ENCODE measurements at regions of chr4 and their contacts with region 1.

Region 1: DNA sequence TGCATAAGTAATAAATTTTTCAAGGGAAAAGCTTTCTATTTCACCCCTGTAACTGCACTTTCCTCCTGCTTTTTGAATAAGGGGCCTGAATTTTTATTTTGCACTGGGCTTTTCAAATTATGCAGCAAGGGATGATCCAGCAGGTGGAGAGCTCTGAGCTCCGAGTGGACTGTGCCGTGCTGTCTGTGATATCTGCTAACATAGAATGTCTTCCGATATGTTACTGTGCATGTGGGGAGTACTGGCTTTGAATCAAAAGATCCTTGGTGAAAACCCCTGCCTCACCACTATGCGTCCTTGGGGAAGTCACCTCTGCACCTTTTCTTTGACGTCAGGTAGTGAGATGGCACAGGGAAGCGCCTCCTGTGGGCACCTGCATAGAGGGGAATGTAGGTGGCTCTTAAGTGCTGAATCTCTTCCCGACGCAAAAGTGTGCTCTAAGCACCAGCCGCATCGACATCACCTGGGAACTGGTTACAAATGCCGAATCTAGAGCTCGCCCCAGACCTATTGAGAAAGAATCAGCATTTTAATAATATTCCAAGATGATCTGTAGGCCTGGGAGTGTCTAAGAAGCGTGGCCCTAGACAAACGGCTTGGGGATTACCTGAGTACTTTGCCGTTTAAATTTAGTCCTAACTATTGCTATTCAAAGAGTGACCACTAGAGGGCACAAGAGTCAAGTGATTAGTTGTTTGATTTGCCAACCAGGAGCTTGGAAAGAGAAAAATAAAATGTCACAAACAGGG is 19.2 kb upstream of the WFS1 start:
- DNase-seq: no peak
- ATAC-seq: peak; percentile 63
- H3K4me3 Mint-ChIP-seq: no peak overlapping the region
- H3K27ac Mint-ChIP-seq: no peak overlapping the region
- H3K4me1 Mint-ChIP-seq: peaks cover 5% of the 10 kb centered on the region
- H3K27me3 Mint-ChIP-seq: peaks cover 54% of the 10 kb centered on the region

Region 2: DNA sequence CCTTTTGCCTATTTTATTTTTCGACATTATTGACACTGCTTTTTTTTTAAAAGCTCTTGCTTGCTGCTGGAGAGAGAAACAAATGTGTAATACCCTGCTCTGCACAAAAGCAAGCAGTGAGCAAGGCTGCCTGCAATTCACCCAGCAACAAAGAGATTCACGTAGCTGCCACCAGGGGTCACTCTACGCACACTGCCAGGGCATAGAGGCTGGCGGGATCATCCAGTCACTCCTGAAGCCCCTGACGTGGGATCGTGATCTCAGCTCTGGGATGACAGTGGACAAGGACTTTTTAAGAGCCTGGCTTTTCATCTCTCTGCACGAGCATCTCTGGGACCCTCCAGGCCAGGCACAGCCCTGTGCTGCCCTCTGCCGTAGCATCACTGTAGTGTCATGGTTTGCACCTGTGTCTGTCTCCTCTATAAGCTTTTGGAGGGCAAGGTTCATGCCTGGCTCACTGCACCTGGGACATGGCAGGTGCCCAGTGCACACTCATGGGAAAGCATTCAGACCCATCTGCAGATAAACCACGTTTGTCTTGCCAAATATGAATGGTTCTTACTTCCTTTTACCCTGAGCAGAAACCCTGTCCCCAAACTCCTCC is 252.0 kb before region 1 on chr4:
- CTCF ChIA-PET with region 1: interaction called, 25 read pairs
- DNase-seq: peak; percentile 66
- ATAC-seq: peak; percentile 77
- H3K4me3 Mint-ChIP-seq: no peak overlapping the region
- H3K27ac Mint-ChIP-seq: no peak overlapping the region
- H3K4me1 Mint-ChIP-seq: peaks cover 18% of the 10 kb centered on the region
- H3K27me3 Mint-ChIP-seq: peaks cover 7% of the 10 kb centered on the region

Region 3: DNA sequence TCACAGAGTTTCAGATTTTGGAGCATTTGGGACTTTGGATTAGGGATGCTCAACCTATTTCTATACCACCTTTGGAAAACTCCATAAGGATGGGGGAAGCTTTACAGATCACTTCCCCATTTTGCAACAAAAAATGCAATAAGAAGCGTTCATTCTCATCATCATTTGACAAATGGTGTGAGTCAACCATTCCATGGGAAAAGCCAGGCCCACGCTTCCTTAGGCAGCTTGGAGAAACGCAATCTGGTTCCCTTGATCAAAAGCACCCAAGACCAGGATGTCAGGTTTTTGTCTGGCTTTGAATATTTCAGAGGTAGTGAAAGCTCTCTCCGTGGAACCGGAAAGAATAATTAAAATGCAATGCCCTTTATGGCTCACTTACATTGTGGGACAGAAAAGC is 152.8 kb before region 1 on chr4:
- CTCF ChIA-PET with region 1: no interaction called
- DNase-seq: no peak
- ATAC-seq: no peak
- H3K4me3 Mint-ChIP-seq: no peak overlapping the region
- H3K27ac Mint-ChIP-seq: no peak overlapping the region
- H3K4me1 Mint-ChIP-seq: peaks cover 18% of the 10 kb centered on the region
- H3K27me3 Mint-ChIP-seq: no peaks in the 10 kb centered on the region

Region 4: GRCh38 chr4:6200011-6200921 is 50.1 kb before region 1 on chr4 and contains the start of gene JAKMIP1:
- CTCF ChIA-PET with region 1: interaction called, 18 read pairs
- DNase-seq: peak; percentile 93
- ATAC-seq: peak; percentile 70
- H3K4me3 Mint-ChIP-seq: peak within 1 kb of the TSS; percentile 94
- H3K27ac Mint-ChIP-seq: peak within 1 kb of the TSS; percentile 80
- H3K4me1 Mint-ChIP-seq: peaks cover 48% of the 10 kb centered on the region
- H3K27me3 Mint-ChIP-seq: peaks cover 11% of the 10 kb centered on the region
- total RNA-seq, gene JAKMIP1: 41.7 to 57.8 TPM

Region 5: GRCh38 chr4:6269616-6270511 is 19.5 kb after region 1 on chr4 and contains the start of gene WFS1:
- CTCF ChIA-PET with region 1: interaction called, 71 read pairs
- DNase-seq: peak; percentile 98
- ATAC-seq: peak; percentile 100
- H3K4me3 Mint-ChIP-seq: peak within 1 kb of the TSS; percentile 67
- H3K27ac Mint-ChIP-seq: no peak within 1 kb of the TSS
- H3K4me1 Mint-ChIP-seq: peaks cover 26% of the 10 kb centered on the region
- H3K27me3 Mint-ChIP-seq: peaks cover 58% of the 10 kb centered on the region
- total RNA-seq, gene WFS1: 1.8 to 2.2 TPM

Region 6: GRCh38 chr4:6546681-6547447 is 296.5 kb after region 1 on chr4:
- CTCF ChIA-PET with region 1: interaction called, 14 read pairs
- DNase-seq: peak; percentile 63
- ATAC-seq: peak; percentile 57
- H3K4me3 Mint-ChIP-seq: no peak overlapping the region
- H3K27ac Mint-ChIP-seq: no peak overlapping the region
- H3K4me1 Mint-ChIP-seq: no peaks in the 10 kb centered on the region
- H3K27me3 Mint-ChIP-seq: peaks cover 7% of the 10 kb centered on the region